GM12878 (cell line): ENCODE measurements at regions of chr2 and their contacts with region 1.

Region 1: GRCh38 chr2:46193346-46193745 is 103.9 kb upstream of the EPAS1 start:
- DNase-seq: no peak
- ATAC-seq: no peak
- H3K4me3 ChIP-seq: no peak overlapping the region
- H3K27ac ChIP-seq: no peak overlapping the region
- H3K4me1 ChIP-seq: no peaks in the 10 kb centered on the region
- H3K27me3 ChIP-seq: no peaks in the 10 kb centered on the region
- CTCF ChIP-seq: no peak
- EP300 ChIP-seq: no peak
- POLR2A ChIP-seq: no peak
- RAD21 ChIP-seq: no peak

Region 2: DNA sequence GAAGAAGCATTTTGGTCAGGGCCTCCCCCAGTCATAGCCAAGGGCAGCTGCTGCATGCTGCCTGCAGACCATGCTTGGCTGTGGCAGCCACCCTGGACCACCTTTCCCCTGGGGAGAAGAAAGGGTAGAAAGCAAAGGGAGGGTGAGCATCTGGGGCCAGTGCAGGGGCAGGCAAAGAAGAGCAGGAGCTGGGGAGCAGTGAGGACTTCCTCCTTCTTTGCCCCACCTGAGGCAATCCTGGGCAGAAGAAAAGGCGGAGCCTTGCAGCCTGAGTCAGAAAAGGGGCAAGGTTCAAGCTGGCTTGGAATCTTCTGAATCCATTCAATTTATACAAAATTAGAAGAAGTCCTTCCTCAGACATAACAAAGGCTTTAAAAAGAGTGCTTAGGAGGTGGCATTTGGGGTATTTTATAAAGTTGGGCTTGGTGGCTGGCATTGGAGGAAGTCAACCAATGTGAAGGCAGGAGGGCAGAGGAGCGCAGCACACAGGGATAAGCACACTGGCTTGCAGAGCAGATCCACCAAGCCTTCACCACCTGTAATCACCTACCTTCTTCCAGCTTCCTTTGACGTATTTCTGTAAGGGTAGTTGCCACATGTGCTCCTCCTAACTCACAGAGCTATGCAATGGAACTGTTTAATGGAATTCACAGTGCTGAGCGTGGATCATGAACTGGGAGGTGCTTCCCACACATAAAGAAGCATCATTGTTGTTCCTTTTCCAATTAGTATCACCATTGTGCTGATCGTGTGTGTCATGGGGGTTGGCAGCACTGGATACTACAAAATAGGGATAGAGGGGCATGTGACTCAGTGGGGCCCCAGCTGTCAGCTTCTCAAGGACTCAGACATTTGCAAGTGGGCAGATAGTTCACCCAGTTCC is 50.6 kb before region 1 on chr2:
- CTCF ChIA-PET with region 1: no interaction called
- POLR2A ChIA-PET with region 1: no interaction called
- RAD21 ChIA-PET with region 1: no interaction called
- SMC1A ChIA-PET with region 1: no interaction called
- in situ Hi-C with region 1: loop called (anchors 5 kb)
- intact Hi-C with region 1: no loop called
- DNase-seq: no peak
- ATAC-seq: no peak
- H3K4me3 ChIP-seq: no peak overlapping the region
- H3K27ac ChIP-seq: no peak overlapping the region
- H3K4me1 ChIP-seq: no peaks in the 10 kb centered on the region
- H3K27me3 ChIP-seq: no peaks in the 10 kb centered on the region
- CTCF ChIP-seq: no peak
- EP300 ChIP-seq: no peak
- POLR2A ChIP-seq: no peak
- RAD21 ChIP-seq: no peak